PC-3 (cell line): ENCODE measurements at regions of chr17 and their contacts with region 1.

Region 1: DNA sequence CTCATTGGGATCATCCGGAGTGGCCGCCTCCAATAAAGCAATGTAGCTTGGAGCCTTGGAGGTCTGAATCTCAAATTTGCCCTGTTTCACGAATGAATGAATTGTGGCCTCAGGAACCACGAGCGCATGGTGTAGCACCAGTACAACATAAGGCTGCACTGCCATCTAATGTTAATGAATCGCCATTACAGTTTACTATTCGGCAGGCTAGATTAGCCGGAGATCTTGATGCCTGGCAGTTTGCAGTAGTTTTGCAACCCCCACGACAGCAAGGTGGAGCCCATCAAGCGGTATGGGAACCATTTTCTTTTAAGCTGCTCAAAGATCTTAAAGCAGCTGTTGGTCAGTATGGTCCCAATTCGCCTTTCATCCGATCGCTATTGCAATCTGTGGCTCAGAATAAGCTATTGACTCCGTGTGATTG is 18.8 kb downstream of the ALOX15B start:
- DNase-seq: peak; percentile 94
- ATAC-seq: peak; percentile 61
- H3K4me3 ChIP-seq: peak overlapping the region; percentile 64
- H3K27ac ChIP-seq: peak overlapping the region; percentile 97
- H3K4me1 ChIP-seq: peaks cover 39% of the 10 kb centered on the region
- H3K27me3 ChIP-seq: no peaks in the 10 kb centered on the region
- CTCF ChIP-seq: peak; percentile 72

Region 2: GRCh38 chr17:7915611-7916382 is 141.9 kb before region 1 on chr17 and contains the start of gene RNF227:
- CTCF ChIA-PET with region 1: interaction called, 13 read pairs
- POLR2A ChIA-PET with region 1: interaction called, 4 read pairs
- intact Hi-C with region 1: loop called (anchors 1 kb)
- DNase-seq: peak; percentile 83
- ATAC-seq: peak; percentile 76
- H3K4me3 ChIP-seq: peak within 1 kb of the TSS; percentile 69
- H3K27ac ChIP-seq: no peak within 1 kb of the TSS
- H3K4me1 ChIP-seq: peaks cover 17% of the 10 kb centered on the region
- H3K27me3 ChIP-seq: no peaks in the 10 kb centered on the region
- CTCF ChIP-seq: no peak
- total RNA-seq, gene RNF227: 0.11 and 0.52 TPM in 2 replicates

Region 3: GRCh38 chr17:7989781-7990655 is 67.7 kb before region 1 on chr17:
- CTCF ChIA-PET with region 1: interaction called, 11 read pairs
- POLR2A ChIA-PET with region 1: no interaction called
- intact Hi-C with region 1: loop called (anchors 2 kb)
- DNase-seq: peak; percentile 80
- ATAC-seq: peak; percentile 85
- H3K4me3 ChIP-seq: peak overlapping the region; percentile 81
- H3K27ac ChIP-seq: peak overlapping the region; percentile 8; the same call in 1 of the 2 replicates
- H3K4me1 ChIP-seq: peaks cover 7% of the 10 kb centered on the region; the same call in 1 of the 2 replicates
- H3K27me3 ChIP-seq: no peaks in the 10 kb centered on the region
- CTCF ChIP-seq: peak; percentile 82

Region 4: DNA sequence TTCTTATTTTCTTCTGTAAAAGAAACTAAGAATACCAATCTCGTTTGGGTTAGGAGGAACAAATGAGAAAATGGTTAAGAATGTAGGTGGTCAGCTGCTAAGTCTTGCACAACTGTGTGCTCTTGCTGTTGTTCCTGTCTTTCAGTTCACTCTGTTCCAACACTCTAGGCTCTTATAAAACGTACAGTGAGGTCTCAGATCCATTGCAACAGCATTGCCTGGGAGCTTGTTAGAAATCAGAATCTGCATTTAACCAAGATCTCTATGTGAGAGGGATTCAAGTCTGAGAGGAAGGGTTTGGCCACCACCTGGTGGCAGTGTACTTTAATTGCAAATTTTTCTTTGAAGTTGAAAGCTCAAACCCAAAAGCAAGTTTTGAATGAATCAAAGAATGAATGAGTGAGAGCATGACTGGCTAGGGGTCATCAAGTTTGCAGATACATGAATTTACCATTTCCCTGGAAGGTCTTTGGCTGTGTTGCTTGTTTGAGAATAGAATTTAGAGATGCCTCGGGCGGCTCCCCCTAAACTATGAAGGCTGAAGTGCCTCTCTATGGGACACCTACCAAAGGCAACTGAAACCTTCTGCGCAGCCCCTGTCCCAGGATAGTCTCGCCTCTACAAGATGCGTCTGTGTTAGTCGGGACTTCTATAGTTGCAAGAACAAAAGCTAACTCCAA is 16.3 kb before region 1 on chr17:
- CTCF ChIA-PET with region 1: interaction called, 10 read pairs
- POLR2A ChIA-PET with region 1: no interaction called
- intact Hi-C with region 1: no loop called
- DNase-seq: peak; percentile 72
- ATAC-seq: peak; percentile 70
- H3K4me3 ChIP-seq: no peak overlapping the region
- H3K27ac ChIP-seq: no peak overlapping the region
- H3K4me1 ChIP-seq: 0 out of 2 replicates have a peak, but pooled peaks cover 5% of the 10 kb centered on the region
- H3K27me3 ChIP-seq: no peaks in the 10 kb centered on the region
- CTCF ChIP-seq: peak; percentile 76

Region 5: DNA sequence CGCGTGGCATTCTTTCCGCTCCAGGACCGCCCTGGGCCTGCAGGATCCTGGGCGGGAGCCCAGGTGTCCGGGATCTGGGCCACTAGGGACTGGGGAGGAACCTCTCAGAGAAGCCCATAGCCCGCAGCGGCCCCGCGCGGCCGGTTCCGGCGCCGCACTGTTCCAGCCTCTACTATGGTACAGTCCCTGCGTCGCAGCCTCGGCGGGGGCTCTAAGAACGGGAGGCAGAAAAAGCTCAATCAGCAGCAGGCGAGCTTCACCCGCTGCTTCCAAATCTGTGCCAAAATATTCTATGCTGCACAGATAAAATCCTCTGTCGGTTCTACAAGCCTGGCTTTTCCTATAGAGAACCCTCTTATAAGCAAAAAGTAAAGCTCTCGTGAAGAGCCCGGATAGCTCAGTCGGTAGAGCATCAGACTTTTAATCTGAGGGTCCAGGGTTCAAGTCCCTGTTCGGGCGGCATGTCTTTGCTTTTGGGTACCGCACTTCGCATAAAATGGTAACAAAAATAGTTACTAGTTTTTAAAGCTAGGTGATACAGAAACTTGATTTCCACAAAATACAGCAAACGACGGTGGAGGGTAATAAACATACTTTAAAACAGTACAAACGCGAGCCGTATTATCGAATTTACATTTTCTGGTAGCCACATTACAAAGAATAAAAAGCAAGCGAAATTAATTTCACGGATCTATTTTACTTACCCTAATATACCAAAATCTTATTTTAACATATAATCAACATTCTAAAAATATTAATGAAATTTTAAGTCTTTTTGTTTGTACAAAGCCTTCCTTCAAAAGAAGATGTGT is 61.3 kb after region 1 on chr17:
- CTCF ChIA-PET with region 1: interaction called, 6 read pairs
- POLR2A ChIA-PET with region 1: no interaction called
- intact Hi-C with region 1: loop called (anchors 1 kb)
- DNase-seq: peak; percentile 77
- ATAC-seq: peak; percentile 39
- H3K4me3 ChIP-seq: peak overlapping the region; percentile 72
- H3K27ac ChIP-seq: peak overlapping the region; percentile 94
- H3K4me1 ChIP-seq: peaks cover 15% of the 10 kb centered on the region; the same call in 1 of the 2 replicates
- H3K27me3 ChIP-seq: no peaks in the 10 kb centered on the region
- CTCF ChIP-seq: peak; percentile 79